WTC11 (cell line): ENCODE measurements at regions of chr11 and their contacts with region 1.

Region 1: GRCh38 chr11:76207642-76208401 is 1.5 kb upstream of the WNT11 start:
- DNase-seq: peak; percentile 84
- ATAC-seq: peak; percentile 40
- H3K4me3 Mint-ChIP-seq: peak overlapping the region; percentile 67
- H3K27ac Mint-ChIP-seq: no peak overlapping the region
- H3K4me1 Mint-ChIP-seq: peaks cover 24% of the 10 kb centered on the region
- H3K27me3 Mint-ChIP-seq: peaks cover 96% of the 10 kb centered on the region
- CTCF ChIP-seq: peak; percentile 83

Region 2: GRCh38 chr11:76120513-76121101 is 87.2 kb before region 1 on chr11:
- CTCF ChIA-PET with region 1: interaction called, 16 read pairs
- POLR2A ChIA-PET with region 1: no interaction called
- DNase-seq: no peak
- ATAC-seq: peak; percentile 87
- H3K4me3 Mint-ChIP-seq: no peak overlapping the region
- H3K27ac Mint-ChIP-seq: no peak overlapping the region; the same call in 1 of the 2 replicates
- H3K4me1 Mint-ChIP-seq: peaks cover 7% of the 10 kb centered on the region
- H3K27me3 Mint-ChIP-seq: no peaks in the 10 kb centered on the region
- CTCF ChIP-seq: no peak

Region 3: GRCh38 chr11:76225122-76225611 is 17.3 kb after region 1 on chr11:
- CTCF ChIA-PET with region 1: interaction called, 33 read pairs
- POLR2A ChIA-PET with region 1: no interaction called
- DNase-seq: no peak
- ATAC-seq: no peak
- H3K4me3 Mint-ChIP-seq: no peak overlapping the region
- H3K27ac Mint-ChIP-seq: no peak overlapping the region
- H3K4me1 Mint-ChIP-seq: no peaks in the 10 kb centered on the region
- H3K27me3 Mint-ChIP-seq: no peaks in the 10 kb centered on the region; the same call in 1 of the 2 replicates
- CTCF ChIP-seq: no peak

Region 4: GRCh38 chr11:76257074-76257719 is 49.4 kb after region 1 on chr11:
- CTCF ChIA-PET with region 1: interaction called, 51 read pairs
- POLR2A ChIA-PET with region 1: no interaction called
- DNase-seq: no peak
- ATAC-seq: peak; percentile 12; the same call in 1 of the 2 replicates
- H3K4me3 Mint-ChIP-seq: no peak overlapping the region
- H3K27ac Mint-ChIP-seq: no peak overlapping the region
- H3K4me1 Mint-ChIP-seq: peaks cover 7% of the 10 kb centered on the region; the same call in 1 of the 2 replicates
- H3K27me3 Mint-ChIP-seq: no peaks in the 10 kb centered on the region; the same call in 1 of the 2 replicates
- CTCF ChIP-seq: no peak

Region 5: GRCh38 chr11:76307396-76307795 is 99.6 kb after region 1 on chr11:
- CTCF ChIA-PET with region 1: interaction called, 59 read pairs
- POLR2A ChIA-PET with region 1: no interaction called
- DNase-seq: no peak
- ATAC-seq: peak; percentile 48
- H3K4me3 Mint-ChIP-seq: no peak overlapping the region
- H3K27ac Mint-ChIP-seq: no peak overlapping the region
- H3K4me1 Mint-ChIP-seq: peaks cover 16% of the 10 kb centered on the region
- H3K27me3 Mint-ChIP-seq: no peaks in the 10 kb centered on the region
- CTCF ChIP-seq: no peak

Region 6: DNA sequence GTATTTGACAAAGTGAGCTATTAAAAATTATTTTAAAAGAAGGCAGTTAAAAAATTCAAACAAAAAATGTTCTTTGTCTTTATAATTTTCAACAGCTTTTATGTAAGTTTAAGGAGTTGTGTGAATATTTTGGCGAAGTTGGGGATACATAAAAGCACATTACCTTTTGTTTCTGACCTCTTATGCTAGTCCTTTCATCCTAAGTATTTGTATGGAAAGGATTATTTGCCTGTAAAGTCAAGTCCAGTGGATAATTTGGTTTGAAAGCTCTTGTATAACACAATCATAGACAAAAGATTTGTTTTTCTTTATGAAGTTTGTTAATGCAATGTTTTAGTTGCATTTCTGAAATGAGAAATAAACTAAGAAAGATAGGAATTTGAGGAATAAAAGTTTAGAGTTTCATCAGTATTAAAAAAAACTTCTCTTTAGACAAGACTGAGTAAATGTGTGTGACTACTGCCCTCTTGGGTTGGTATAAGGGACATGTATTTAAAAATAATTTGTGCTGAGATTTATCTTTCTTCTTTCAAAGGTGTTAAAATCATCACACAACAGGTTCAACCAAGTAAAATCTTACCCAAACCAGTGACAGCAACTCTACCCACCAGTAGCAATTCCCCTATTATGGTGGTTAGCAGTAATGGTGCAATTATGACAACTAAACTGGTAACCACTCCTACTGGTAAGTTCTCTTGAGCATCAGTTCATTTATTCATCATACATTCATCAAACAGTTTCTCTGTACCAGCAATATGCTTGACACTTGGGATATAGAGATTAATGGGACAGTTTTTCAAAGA is 305.2 kb after region 1 on chr11:
- CTCF ChIA-PET with region 1: interaction called, 13 read pairs
- POLR2A ChIA-PET with region 1: no interaction called
- DNase-seq: no peak
- ATAC-seq: no peak
- H3K4me3 Mint-ChIP-seq: no peak overlapping the region
- H3K27ac Mint-ChIP-seq: no peak overlapping the region
- H3K4me1 Mint-ChIP-seq: peaks cover 23% of the 10 kb centered on the region
- H3K27me3 Mint-ChIP-seq: no peaks in the 10 kb centered on the region
- CTCF ChIP-seq: no peak; the same call in 1 of the 2 replicates